ENCODE measurements at regions of chr6 and their contacts with region 1.

Region 1: GRCh38 chr6:167219967-167220512 is 62.3 kb upstream of the GPR31 start:
- DNase-seq: no peak
- H3K4me3 ChIP-seq: no peak overlapping the region
- H3K27ac ChIP-seq: no peak overlapping the region
- H3K4me1 ChIP-seq: no peaks in the 10 kb centered on the region
- H3K27me3 ChIP-seq: no peaks in the 10 kb centered on the region
- CTCF ChIP-seq: no peak
- POLR2A ChIP-seq: no peak

Region 2: DNA sequence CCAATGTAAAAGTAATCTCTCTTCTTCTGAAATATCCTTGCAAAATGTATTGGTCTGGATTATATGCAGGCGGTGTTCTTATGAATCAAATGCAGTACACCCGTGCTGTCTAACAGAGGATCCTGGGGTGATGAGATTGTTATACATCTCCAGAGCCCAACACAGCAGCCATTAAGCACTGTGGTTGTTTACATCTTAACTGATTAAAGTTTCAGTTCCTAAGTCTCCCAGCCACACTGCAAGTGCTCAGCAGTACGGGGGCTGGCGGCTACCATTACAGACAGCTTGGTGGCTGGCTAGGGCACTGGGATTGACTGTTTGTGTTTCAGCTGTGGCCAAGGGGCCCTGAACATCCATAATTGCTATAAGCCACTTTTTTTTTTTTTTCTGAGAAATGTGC is 78.1 kb after region 1 on chr6:
- intact Hi-C with region 1: loop called (anchors 10 kb)
- DNase-seq: no peak
- H3K4me3 ChIP-seq: no peak overlapping the region
- H3K27ac ChIP-seq: no peak overlapping the region
- H3K4me1 ChIP-seq: no peaks in the 10 kb centered on the region
- H3K27me3 ChIP-seq: no peaks in the 10 kb centered on the region
- CTCF ChIP-seq: no peak
- POLR2A ChIP-seq: no peak

Measured in spleen (tissue), 13 donors.